ENCODE measurements at regions of chr9 and their contacts with region 1.

Region 1: GRCh38 chr9:94166237-94166963 is 82.1 kb downstream of the PTPDC1 start:
- DNase-seq: peak; percentile 88 to 98 (median 93)
- ATAC-seq: peak; percentile 60
- H3K4me3 ChIP-seq: peak overlapping the region; percentile 52 to 89
- H3K4me3 Mint-ChIP-seq: peak overlapping the region; percentile 90
- H3K27ac ChIP-seq: peak overlapping the region; percentile 89 to 92
- H3K27ac Mint-ChIP-seq: peak overlapping the region; percentile 93
- H3K4me1 ChIP-seq: peaks cover 51% of the 10 kb centered on the region
- H3K4me1 Mint-ChIP-seq: peaks cover 55% of the 10 kb centered on the region
- H3K27me3 ChIP-seq: no peaks in the 10 kb centered on the region
- H3K27me3 Mint-ChIP-seq: no peaks in the 10 kb centered on the region
- CTCF ChIP-seq: no peak

Region 2: GRCh38 chr9:92325269-92325990 is 1841.0 kb before region 1 on chr9 and contains the starts of genes CENPP and NOL8:
- CTCF ChIA-PET with region 1: no interaction called
- POLR2A ChIA-PET with region 1: no interaction called
- intact Hi-C with region 1: loop called in 1 of 2 experiments (anchors 10 kb)
- DNase-seq: peak; percentile 70 to 93 (median 83)
- ATAC-seq: peak; percentile 92
- H3K4me3 ChIP-seq: peak within 1 kb of the TSS; percentile 81 to 84
- H3K4me3 Mint-ChIP-seq: peak within 1 kb of the TSS; percentile 99
- H3K27ac ChIP-seq: peak within 1 kb of the TSS; percentile 82 to 97
- H3K27ac Mint-ChIP-seq: peak within 1 kb of the TSS; percentile 99
- H3K4me1 ChIP-seq: peaks cover 18% of the 10 kb centered on the region
- H3K4me1 Mint-ChIP-seq: peaks cover 38% of the 10 kb centered on the region
- H3K27me3 ChIP-seq: no peaks in the 10 kb centered on the region
- H3K27me3 Mint-ChIP-seq: no peaks in the 10 kb centered on the region
- CTCF ChIP-seq: no peak
- total RNA-seq, gene CENPP: 2.8 to 4.6 TPM
- total RNA-seq, gene NOL8: 63.2 to 69.0 TPM

Region 3: GRCh38 chr9:92877531-92878430 is 1288.6 kb before region 1 on chr9 and contains the start of gene ZNF484:
- CTCF ChIA-PET with region 1: no interaction called
- POLR2A ChIA-PET with region 1: no interaction called
- intact Hi-C with region 1: loop called in 1 of 2 experiments (anchors 10 kb)
- DNase-seq: peak; percentile 91 to 100 (median 98)
- ATAC-seq: peak; percentile 96
- H3K4me3 ChIP-seq: peak within 1 kb of the TSS; percentile 76 to 85
- H3K4me3 Mint-ChIP-seq: peak within 1 kb of the TSS; percentile 100
- H3K27ac ChIP-seq: peak within 1 kb of the TSS; percentile 81 to 90
- H3K27ac Mint-ChIP-seq: peak within 1 kb of the TSS; percentile 100
- H3K4me1 ChIP-seq: peaks cover 19% of the 10 kb centered on the region
- H3K4me1 Mint-ChIP-seq: peaks cover 48% of the 10 kb centered on the region
- H3K27me3 ChIP-seq: no peaks in the 10 kb centered on the region
- H3K27me3 Mint-ChIP-seq: no peaks in the 10 kb centered on the region
- CTCF ChIP-seq: no peak
- total RNA-seq, gene ZNF484: 18.4 to 18.7 TPM

Region 4: DNA sequence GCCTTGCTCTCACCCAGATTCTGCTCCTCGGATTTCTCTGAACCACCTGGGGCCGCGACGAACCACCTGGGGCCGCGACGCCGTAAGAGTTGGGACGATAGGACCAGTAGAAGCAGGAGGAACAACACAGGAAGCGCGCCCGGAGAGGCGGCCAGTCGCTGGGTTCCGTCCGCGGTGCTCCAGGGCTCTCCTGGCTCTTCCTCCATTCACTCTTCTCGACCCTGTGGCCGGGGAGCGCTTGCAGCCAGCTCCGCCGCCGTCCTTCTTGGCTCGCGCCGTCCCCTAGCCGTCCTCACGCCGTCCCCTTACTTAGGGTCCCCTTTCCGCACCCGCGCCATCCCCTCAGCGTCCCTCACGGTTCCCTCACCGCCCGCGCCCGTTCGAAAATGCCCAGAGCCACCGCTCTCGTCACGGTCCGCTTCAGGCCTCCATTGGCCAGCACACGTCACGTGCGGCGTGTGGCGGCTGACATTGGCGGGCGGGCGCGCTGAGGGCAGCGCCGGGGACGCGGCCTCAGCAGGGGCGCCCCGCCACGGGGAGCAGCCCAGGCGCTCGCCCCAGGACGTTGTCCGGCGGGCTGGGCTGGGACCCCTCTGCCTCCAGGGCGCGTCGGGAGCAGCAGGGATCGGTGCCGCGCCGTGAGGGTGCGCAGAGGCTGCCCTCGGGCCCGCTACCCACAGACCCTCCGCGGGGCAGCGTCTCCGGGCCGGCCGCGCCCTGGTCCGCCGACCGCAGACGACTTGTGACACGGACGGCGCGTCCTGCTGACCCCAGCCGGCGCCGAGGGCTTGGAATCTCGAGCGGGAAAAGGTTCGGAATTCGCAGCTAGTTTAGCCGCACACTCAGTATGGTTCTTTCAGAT is 135.9 kb before region 1 on chr9:
- CTCF ChIA-PET with region 1: no interaction called
- POLR2A ChIA-PET with region 1: no interaction called
- intact Hi-C with region 1: loop called (anchors 1 kb)
- DNase-seq: peak; percentile 52 to 89 (median 77)
- ATAC-seq: peak; percentile 98
- H3K4me3 ChIP-seq: peak overlapping the region; percentile 76 to 97
- H3K4me3 Mint-ChIP-seq: peak overlapping the region; percentile 100
- H3K27ac ChIP-seq: peak overlapping the region; percentile 63 to 81
- H3K27ac Mint-ChIP-seq: peak overlapping the region; percentile 98
- H3K4me1 ChIP-seq: peaks cover 7% of the 10 kb centered on the region
- H3K4me1 Mint-ChIP-seq: peaks cover 23% of the 10 kb centered on the region
- H3K27me3 ChIP-seq: no peaks in the 10 kb centered on the region
- H3K27me3 Mint-ChIP-seq: peaks cover 6% of the 10 kb centered on the region
- CTCF ChIP-seq: no peak

Region 5: GRCh38 chr9:94259077-94259892 is 92.9 kb after region 1 on chr9 and contains the start of gene ZNF169:
- CTCF ChIA-PET with region 1: no interaction called
- POLR2A ChIA-PET with region 1: interaction called, 3 read pairs
- intact Hi-C with region 1: loop called (anchors 1 to 2 kb)
- DNase-seq: peak; percentile 70 to 90 (median 85)
- ATAC-seq: peak; percentile 100
- H3K4me3 ChIP-seq: peak within 1 kb of the TSS; percentile 85 to 98
- H3K4me3 Mint-ChIP-seq: peak within 1 kb of the TSS; percentile 99
- H3K27ac ChIP-seq: peak within 1 kb of the TSS; percentile 54 to 75
- H3K27ac Mint-ChIP-seq: peak within 1 kb of the TSS; percentile 95
- H3K4me1 ChIP-seq: peaks cover 10% of the 10 kb centered on the region
- H3K4me1 Mint-ChIP-seq: peaks cover 38% of the 10 kb centered on the region
- H3K27me3 ChIP-seq: no peaks in the 10 kb centered on the region
- H3K27me3 Mint-ChIP-seq: peaks cover 5% of the 10 kb centered on the region
- CTCF ChIP-seq: no peak
- total RNA-seq, gene ZNF169: 3.3 to 6.4 TPM

Region 6: GRCh38 chr9:94870793-94871558 is 704.6 kb after region 1 on chr9:
- CTCF ChIA-PET with region 1: no interaction called
- POLR2A ChIA-PET with region 1: no interaction called
- intact Hi-C with region 1: loop called in 1 of 2 experiments (anchors 10 kb)
- DNase-seq: peak in 7 of 9 experiments; percentile 11 to 93 (median 47)
- ATAC-seq: peak; percentile 88
- H3K4me3 ChIP-seq: peak overlapping the region in 1 of 2 experiments; percentile 7
- H3K4me3 Mint-ChIP-seq: peak overlapping the region; percentile 59
- H3K27ac ChIP-seq: peak overlapping the region; percentile 26 to 55
- H3K27ac Mint-ChIP-seq: peak overlapping the region; percentile 94
- H3K4me1 ChIP-seq: peaks cover 26% of the 10 kb centered on the region
- H3K4me1 Mint-ChIP-seq: peaks cover 31% of the 10 kb centered on the region
- H3K27me3 ChIP-seq: no peaks in the 10 kb centered on the region
- H3K27me3 Mint-ChIP-seq: no peaks in the 10 kb centered on the region
- CTCF ChIP-seq: no peak